Activated CD4-positive, alpha-beta T cell treated with anti-CD3 and anti-CD28 coated beads for 36 hours (primary cell): ENCODE measurements at regions of chr19 and their contacts with region 1.

Region 1: GRCh38 chr19:47112997-47113849 is at the start of gene ZC3H4:
- DNase-seq: peak; percentile 100
- ATAC-seq: peak; percentile 91
- H3K4me3 Mint-ChIP-seq: peak within 1 kb of the TSS; percentile 93
- H3K27ac Mint-ChIP-seq: peak within 1 kb of the TSS; percentile 100
- H3K4me1 Mint-ChIP-seq: peaks cover 24% of the 10 kb centered on the region
- H3K27me3 Mint-ChIP-seq: no peaks in the 10 kb centered on the region
- total RNA-seq, gene ZC3H4: 88.6 to 128 TPM

Region 2: DNA sequence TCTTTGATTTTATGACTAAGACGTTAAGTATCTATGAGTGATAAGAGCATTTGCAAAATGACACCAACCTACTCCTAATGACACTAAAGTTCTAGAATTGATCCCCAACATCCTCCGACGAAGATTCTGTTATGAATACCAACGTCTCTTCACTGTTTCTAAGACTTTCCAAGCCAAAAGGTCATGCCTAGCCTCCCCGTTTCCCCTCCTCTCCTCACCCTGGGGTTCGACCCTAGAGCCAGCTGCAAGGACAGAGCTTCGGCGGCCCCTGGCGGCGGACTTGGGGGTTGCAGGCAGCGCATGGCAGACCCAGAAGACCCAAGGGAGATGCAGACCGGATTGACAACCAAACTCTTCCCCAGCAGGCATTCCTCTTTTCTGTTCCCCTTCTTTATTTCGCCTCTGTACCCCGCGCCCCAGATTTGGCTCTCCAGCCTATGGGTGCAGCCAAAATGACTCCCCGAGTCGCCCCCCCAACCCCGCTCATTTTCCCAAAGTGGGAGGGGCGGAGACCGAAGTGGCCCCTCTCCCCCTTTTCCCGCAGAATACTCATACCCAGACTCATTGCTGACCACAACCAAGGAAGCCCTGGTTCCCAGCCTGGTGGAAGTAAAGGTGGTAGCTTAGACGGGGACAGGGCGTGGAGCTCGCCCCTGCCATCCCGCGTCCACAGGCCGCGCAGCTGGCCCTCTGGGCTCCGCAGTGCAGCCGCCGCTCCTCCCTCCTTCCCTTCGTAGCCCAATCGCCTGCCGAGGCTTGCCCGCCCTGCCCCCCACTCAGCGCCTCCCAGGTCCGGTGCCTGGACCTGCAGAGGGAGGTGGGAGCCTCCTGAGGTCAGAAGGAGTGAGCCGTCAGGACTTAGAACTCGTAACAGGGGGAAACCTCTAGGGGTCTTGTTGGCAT is 1469.9 kb before region 1 on chr19:
- CTCF ChIA-PET with region 1: no interaction called
- POLR2A ChIA-PET with region 1: no interaction called
- intact Hi-C with region 1: loop called in 1 of 2 experiments (anchors 5 kb)
- DNase-seq: peak; percentile 97
- ATAC-seq: peak; percentile 54
- H3K4me3 Mint-ChIP-seq: peak overlapping the region; percentile 94
- H3K27ac Mint-ChIP-seq: peak overlapping the region; percentile 93
- H3K4me1 Mint-ChIP-seq: peaks cover 57% of the 10 kb centered on the region
- H3K27me3 Mint-ChIP-seq: no peaks in the 10 kb centered on the region

Region 3: GRCh38 chr19:46860125-46860845 is 252.9 kb before region 1 on chr19:
- CTCF ChIA-PET with region 1: interaction called, 4 read pairs
- POLR2A ChIA-PET with region 1: interaction called, 4 read pairs
- intact Hi-C with region 1: loop called (anchors 1 to 2 kb)
- DNase-seq: peak; percentile 99
- ATAC-seq: peak; percentile 82
- H3K4me3 Mint-ChIP-seq: no peak overlapping the region
- H3K27ac Mint-ChIP-seq: peak overlapping the region; percentile 78
- H3K4me1 Mint-ChIP-seq: peaks cover 25% of the 10 kb centered on the region
- H3K27me3 Mint-ChIP-seq: no peaks in the 10 kb centered on the region

Region 4: GRCh38 chr19:47124937-47125668 is 11.9 kb after region 1 on chr19:
- CTCF ChIA-PET with region 1: interaction called, 16 read pairs
- POLR2A ChIA-PET with region 1: interaction called, 10 read pairs
- intact Hi-C with region 1: loop called (anchors 1 to 2 kb)
- DNase-seq: peak; percentile 14
- ATAC-seq: peak; percentile 64
- H3K4me3 Mint-ChIP-seq: no peak overlapping the region
- H3K27ac Mint-ChIP-seq: peak overlapping the region; percentile 20
- H3K4me1 Mint-ChIP-seq: peaks cover 3% of the 10 kb centered on the region
- H3K27me3 Mint-ChIP-seq: no peaks in the 10 kb centered on the region

Region 5: DNA sequence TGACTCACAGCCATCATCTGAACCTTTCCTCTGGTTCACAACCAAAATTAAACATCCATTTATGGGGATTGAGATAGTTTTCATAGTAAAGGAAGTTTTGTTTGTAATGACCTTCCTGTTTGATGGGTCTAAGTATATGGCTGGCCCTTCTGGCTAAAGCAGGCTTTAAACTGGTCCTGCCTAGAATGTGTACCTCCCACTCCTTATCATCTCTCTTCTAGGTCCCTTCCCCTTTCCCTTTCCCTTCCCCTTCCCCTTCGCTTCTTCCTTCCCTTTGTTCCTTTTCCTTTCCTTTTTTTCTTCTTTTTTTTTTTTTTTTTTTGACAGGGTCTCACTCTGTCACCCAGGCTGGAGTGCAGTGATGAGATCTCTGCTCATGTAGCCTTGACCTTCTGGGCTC is 82.2 kb after region 1 on chr19:
- CTCF ChIA-PET with region 1: no interaction called
- POLR2A ChIA-PET with region 1: no interaction called
- intact Hi-C with region 1: no loop called
- DNase-seq: no peak
- ATAC-seq: no peak
- H3K4me3 Mint-ChIP-seq: no peak overlapping the region
- H3K27ac Mint-ChIP-seq: no peak overlapping the region
- H3K4me1 Mint-ChIP-seq: peaks cover 25% of the 10 kb centered on the region
- H3K27me3 Mint-ChIP-seq: no peaks in the 10 kb centered on the region

Region 6: DNA sequence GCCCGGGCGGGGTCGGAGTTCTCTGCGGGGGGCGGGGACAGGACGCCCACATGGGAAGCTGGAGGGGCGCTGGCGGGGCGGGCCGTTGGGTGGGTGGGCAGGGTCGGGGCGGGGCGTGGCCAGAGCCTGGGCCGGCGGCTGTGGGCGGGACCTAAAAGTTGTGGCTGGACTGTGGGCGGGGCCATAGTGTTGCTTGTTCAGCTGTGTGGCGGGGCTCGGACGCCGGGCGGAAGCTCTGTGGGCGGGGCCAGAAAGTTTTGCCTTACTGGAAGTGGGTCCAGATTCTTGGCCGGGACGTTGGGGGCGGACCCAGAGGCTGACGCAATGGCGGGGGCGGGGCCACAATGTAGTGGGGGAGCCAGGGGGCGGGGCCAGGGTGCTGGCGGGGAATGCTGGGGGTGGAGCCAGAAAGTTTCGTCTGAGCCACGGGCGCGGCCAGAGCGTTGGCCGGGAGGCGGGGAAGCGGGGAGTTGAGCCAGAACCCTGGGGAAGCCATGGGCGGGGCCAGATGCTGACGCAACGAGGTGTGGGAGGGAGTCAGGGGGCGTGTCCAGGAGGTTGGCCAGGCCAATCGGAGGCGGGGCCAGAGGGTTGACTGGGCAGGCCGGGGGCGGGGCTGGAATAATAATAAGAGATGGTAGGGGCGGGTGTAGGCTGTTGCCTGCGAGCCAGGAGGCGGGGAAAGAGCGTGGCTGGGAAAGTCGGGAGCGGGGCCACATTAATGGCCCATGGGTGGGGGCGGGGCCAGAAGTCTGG is 143.6 kb after region 1 on chr19:
- CTCF ChIA-PET with region 1: interaction called, 3 read pairs
- POLR2A ChIA-PET with region 1: interaction called, 6 read pairs
- intact Hi-C with region 1: loop called in 1 of 2 experiments (anchors 1 kb)
- DNase-seq: peak; percentile 100
- ATAC-seq: peak; percentile 86
- H3K4me3 Mint-ChIP-seq: peak overlapping the region; percentile 90
- H3K27ac Mint-ChIP-seq: peak overlapping the region; percentile 93
- H3K4me1 Mint-ChIP-seq: peaks cover 31% of the 10 kb centered on the region
- H3K27me3 Mint-ChIP-seq: no peaks in the 10 kb centered on the region

Region 7: DNA sequence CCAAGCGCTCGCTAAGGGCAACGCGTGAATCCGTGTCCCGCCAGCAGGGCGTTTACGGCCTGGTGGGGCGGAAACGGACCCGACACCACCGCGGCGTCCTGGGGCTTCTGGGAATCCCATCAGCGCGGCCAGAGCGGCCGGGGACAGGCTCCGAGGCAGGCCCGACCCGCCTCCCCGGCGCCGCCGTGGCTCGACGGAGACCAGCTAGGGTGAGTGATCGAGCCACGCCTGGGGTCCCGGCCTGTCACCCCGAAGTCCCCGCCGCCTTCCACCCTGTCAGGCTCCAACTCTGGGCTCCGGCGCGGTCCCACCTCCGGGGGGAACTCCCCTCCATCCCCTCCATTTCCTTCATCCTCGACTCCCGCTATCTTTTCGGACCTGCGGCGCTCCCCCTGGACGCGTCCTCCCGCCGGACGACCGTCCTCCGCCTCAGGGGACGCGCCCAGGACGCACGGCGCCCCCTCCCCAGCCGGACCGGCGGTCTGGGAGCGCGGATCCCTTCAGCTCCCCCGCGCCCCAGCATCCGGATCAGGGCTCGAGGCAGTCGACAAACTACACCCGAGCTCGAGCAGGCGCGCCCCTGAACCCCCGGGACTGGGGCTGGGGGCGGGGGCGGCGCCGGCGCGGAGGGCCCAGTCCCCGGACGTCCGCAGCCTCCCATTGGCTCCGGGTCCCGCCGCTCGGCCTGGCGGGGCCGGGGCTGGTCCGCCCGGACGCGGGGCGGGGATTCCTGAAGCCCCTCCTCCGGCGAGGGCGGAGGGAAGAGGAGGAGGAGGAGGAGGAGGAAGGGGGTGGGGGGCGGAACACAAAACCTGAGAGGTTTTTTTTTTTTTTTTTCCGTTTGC is 495.1 kb after region 1 on chr19:
- CTCF ChIA-PET with region 1: no interaction called
- POLR2A ChIA-PET with region 1: no interaction called
- intact Hi-C with region 1: loop called in 1 of 2 experiments (anchors 2 kb)
- DNase-seq: peak; percentile 97
- ATAC-seq: peak; percentile 93
- H3K4me3 Mint-ChIP-seq: peak overlapping the region; percentile 79
- H3K27ac Mint-ChIP-seq: peak overlapping the region; percentile 72
- H3K4me1 Mint-ChIP-seq: peaks cover 27% of the 10 kb centered on the region
- H3K27me3 Mint-ChIP-seq: no peaks in the 10 kb centered on the region